Ascending aorta (tissue), 2 donors: ENCODE measurements at regions of chr6 and their contacts with region 1.

Region 1: GRCh38 chr6:144394210-144394609 is 109.1 kb downstream of the UTRN start:
- DNase-seq: no peak
- H3K4me3 ChIP-seq: no peak overlapping the region
- H3K27ac ChIP-seq: no peak overlapping the region
- H3K4me1 ChIP-seq: no peaks in the 10 kb centered on the region
- H3K27me3 ChIP-seq: no peaks in the 10 kb centered on the region
- CTCF ChIP-seq: no peak

Region 2: DNA sequence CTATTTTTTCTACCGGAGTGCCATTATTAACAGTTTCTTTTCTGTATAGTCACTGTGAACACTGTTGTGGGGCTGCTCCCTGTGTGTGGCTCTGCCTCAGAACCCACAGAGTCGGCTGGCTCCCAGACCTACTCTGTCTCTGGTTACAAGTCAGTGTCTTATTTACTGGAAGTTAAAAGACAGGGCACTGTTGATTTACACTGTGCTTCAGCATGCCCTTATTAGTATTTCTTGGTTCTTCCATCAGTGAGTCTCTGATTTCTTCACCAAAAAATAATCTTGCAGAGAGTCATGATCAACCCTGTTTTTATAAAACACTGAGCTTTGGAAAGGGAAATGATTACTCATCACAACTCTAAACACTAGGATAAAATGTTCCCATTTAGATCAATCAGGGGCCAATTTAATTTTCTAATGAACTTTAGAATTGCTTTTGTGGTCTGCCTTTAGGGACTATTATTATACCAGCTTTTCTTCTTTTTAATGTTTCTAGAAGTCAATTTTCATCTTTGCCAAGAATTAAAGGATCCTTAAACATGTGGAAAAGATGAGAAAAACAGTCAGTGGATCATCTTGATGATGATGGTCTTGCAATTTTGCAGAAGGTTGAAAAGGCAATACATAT is 16.5 kb before region 1 on chr6:
- intact Hi-C with region 1: loop called (anchors 2 kb)
- DNase-seq: no peak
- H3K4me3 ChIP-seq: no peak overlapping the region
- H3K27ac ChIP-seq: no peak overlapping the region
- H3K4me1 ChIP-seq: peaks cover 3 to 10% of the 10 kb centered on the region in 2 donors
- H3K27me3 ChIP-seq: no peaks in the 10 kb centered on the region
- CTCF ChIP-seq: no peak